Cardiac septum (tissue), 1 donor: ENCODE measurements at regions of chr12 and their contacts with region 1.

Region 1: DNA sequence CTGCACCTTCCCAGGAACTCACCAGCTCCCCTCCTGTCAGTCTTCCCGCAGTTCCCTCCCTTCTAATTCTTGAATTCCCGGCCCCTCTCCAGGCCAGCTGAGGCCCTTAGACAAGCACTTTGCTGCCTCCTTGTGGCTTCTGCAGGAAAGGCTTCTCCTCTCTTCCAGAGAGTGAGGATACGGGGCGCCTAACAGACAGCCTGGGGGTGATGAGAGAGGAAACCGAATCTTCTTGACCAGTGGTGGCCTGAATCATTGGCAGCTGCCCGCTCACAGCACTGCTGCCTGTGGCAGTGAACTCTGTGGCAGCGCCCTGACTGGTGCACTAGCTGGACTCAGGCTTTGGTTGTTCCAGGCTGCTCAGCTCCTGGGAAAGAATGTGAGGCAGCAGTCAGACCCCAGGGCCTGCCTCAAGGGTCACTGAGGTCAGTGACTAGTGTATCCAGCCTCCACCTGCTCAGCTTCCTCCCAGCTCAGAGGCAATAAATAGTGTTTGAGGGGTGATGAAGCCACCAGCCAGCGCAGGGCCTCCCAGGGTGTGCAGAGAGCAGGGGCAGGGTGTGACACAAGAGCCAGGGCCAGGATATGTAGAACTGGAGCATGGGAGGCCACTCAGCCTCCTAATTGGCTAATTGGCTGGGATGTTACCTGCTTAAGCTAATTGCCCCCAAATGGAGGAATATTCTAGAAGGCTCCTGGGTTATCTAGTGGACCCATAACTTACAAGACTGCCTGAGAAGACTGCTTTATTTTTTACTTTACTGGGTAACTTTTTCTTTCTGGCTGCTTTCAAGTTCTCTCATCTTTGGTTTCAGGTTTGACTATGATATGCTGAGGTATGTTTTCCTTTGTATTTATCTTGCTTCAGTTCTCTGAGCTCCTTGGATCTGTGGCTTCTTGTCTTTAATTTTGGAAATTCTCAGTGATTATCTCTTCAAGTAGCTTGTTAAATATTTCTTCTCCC is 12.9 kb upstream of the MCRS1 start:
- DNase-seq: no peak

Region 2: GRCh38 chr12:49366652-49367380 is 214.0 kb before region 1 on chr12:
- intact Hi-C with region 1: loop called (anchors 5 kb)
- DNase-seq: peak; percentile 95

Region 3: GRCh38 chr12:49548822-49549648 is 31.8 kb before region 1 on chr12:
- intact Hi-C with region 1: loop called (anchors 2 kb)
- DNase-seq: peak; percentile 74

Region 4: GRCh38 chr12:49623142-49623904 is 42.5 kb after region 1 on chr12 and contains the start of gene PRPF40B:
- intact Hi-C with region 1: loop called (anchors 2 kb)
- DNase-seq: peak; percentile 95
- total RNA-seq, gene PRPF40B: 30.1 TPM

Region 5: GRCh38 chr12:49767333-49767732 is 186.5 kb after region 1 on chr12:
- intact Hi-C with region 1: no loop called
- DNase-seq: no peak